Activated naive CD4-positive, alpha-beta T cell treated with anti-CD3 and anti-CD28 coated beads for 36 hours (primary cell): ENCODE measurements at regions of chr1 and their contacts with region 1.

Region 1: DNA sequence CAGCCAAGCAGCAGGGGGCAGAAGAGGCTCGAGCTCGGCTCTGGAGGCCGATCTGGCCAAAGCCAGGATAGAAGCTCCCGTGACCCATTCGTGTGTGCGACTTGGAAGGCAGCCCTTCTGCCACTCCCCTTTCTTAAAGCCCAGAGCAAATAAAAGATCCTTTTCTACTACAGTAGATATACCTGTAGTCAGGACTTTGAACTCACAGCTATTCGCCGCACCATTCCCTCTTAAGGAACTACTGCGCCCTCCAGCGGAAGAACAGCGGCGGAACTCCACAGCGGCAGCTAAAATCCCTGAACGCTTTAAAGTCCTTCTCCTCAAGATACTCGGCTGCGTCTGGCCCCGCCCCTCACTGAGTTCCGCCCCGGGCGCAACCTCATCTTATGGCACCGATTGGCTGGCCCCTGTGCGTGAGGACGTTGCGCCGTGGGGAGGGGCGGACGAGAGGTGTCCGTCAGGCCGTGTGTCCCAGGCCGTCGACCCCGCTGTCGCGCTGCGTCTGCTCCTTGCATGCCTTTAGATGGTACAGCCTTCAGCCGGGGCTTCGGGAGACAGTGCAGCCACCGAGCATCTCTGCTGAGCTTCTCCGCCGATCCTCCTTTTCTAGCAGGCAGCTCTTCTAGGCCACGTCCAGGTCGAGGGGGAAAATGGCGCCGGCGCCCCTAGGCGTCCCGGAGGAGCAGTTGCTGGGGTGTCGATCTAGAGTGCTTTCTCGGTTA is at the start of gene LRIG2:
- DNase-seq: peak; percentile 99
- H3K4me3 Mint-ChIP-seq: peak within 1 kb of the TSS; percentile 94
- H3K27ac Mint-ChIP-seq: peak within 1 kb of the TSS; percentile 91
- H3K4me1 Mint-ChIP-seq: peaks cover 27% of the 10 kb centered on the region
- H3K27me3 Mint-ChIP-seq: no peaks in the 10 kb centered on the region
- total RNA-seq, gene LRIG2: 7.7 to 9.1 TPM

Region 2: DNA sequence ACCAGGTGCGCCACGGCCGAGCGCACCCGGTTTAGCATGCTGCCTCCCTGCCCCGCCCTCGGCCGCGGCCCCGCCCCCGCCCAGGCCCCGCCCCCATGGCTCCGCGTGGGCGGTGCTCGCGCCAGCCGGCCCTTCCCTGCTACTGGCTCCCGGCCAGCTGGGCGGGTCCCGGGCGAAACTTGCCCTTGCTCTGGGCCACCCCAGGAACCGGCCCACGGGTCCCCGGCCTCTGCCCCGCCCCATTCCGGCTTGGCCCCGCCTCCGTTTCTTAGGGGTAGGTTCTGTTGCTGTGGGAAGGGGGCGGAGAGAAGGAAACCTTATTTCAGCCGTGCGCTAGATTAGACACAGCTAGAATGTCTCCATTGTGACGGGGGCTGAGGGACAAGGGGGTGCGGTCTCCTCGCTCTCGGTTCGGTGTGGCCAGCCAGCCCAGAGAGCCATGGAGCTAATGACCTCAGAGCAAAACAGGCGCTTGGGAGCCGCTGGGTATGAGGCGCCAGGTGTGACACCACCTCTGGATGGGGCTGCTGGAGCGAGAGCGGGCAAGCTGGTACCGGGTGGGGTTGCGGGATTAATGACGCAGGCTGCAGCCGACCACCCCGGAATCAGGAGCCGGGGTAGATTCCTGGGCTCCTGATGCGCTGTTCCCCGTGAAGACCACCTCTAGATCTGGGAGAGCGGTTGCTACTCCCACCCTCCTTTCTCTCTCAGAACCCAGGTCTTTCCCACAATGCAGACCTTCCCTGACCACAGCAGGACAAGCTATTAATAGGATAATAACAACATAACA is 357.5 kb before region 1 on chr1 and contains the start of gene PPM1J:
- CTCF ChIA-PET with region 1: interaction called, 44 read pairs
- intact Hi-C with region 1: loop called (anchors 2 kb)
- DNase-seq: peak; percentile 95
- H3K4me3 Mint-ChIP-seq: peak within 1 kb of the TSS; percentile 78
- H3K27ac Mint-ChIP-seq: no peak within 1 kb of the TSS
- H3K4me1 Mint-ChIP-seq: peaks cover 24% of the 10 kb centered on the region
- H3K27me3 Mint-ChIP-seq: peaks cover 24% of the 10 kb centered on the region
- total RNA-seq, gene PPM1J: 0.74 to 1.0 TPM

Region 3: DNA sequence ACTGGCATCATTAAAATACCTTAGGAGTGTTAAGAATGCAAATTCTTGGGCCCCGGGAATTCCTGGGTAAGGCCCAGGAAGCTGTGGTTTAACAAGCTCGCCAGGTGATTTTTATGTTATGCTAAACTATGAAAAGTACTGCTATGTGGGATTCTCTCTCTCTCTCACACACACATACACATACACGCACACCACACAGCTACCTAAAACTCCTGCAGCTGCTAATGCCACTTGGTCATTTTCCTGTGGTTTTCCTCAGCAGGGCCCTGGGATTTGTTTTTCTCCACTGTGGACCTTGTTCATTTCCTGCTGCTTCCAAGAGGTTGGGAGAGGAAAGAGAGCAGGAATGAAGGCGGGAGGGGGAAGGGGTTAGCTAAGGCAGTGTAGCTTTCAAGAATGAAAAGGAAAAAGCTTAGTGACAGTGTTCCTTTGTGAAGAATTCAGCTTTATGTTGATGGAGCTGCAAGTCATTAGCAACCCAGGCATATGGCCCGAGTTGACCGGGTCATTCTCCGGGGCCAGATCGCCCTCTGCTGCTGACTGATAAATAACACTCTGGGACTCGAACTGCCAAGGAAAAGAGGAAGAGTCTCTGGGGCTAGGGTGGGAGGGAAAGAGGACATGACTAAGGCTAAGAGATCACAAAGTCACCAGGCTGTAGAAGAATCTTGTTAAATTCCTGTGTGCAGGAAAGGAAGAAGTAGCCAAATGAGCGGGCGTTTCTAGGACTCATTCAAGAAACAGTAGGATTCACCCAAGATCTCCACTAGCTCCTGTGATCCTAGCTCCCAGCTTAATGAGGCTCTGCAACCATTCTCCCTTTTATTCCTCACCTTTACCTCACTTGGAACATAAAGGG is 30.4 kb before region 1 on chr1:
- CTCF ChIA-PET with region 1: interaction called, 13 read pairs
- intact Hi-C with region 1: loop called (anchors 2 kb)
- DNase-seq: peak; percentile 65
- H3K4me3 Mint-ChIP-seq: no peak overlapping the region
- H3K27ac Mint-ChIP-seq: peak overlapping the region; percentile 73
- H3K4me1 Mint-ChIP-seq: peaks cover 26% of the 10 kb centered on the region
- H3K27me3 Mint-ChIP-seq: peaks cover 2% of the 10 kb centered on the region

Region 4: GRCh38 chr1:113133038-113133437 is 60.1 kb after region 1 on chr1:
- CTCF ChIA-PET with region 1: interaction called, 23 read pairs
- intact Hi-C with region 1: loop called (anchors 2 kb)
- DNase-seq: peak; percentile 69
- H3K4me3 Mint-ChIP-seq: no peak overlapping the region
- H3K27ac Mint-ChIP-seq: peak overlapping the region; percentile 76
- H3K4me1 Mint-ChIP-seq: peaks cover 64% of the 10 kb centered on the region
- H3K27me3 Mint-ChIP-seq: no peaks in the 10 kb centered on the region

Region 5: GRCh38 chr1:113677250-113678158 is 604.6 kb after region 1 on chr1:
- CTCF ChIA-PET with region 1: interaction called, 4 read pairs
- intact Hi-C with region 1: loop called (anchors 2 kb)
- DNase-seq: no peak
- H3K4me3 Mint-ChIP-seq: no peak overlapping the region
- H3K27ac Mint-ChIP-seq: no peak overlapping the region
- H3K4me1 Mint-ChIP-seq: no peaks in the 10 kb centered on the region
- H3K27me3 Mint-ChIP-seq: no peaks in the 10 kb centered on the region

Region 6: DNA sequence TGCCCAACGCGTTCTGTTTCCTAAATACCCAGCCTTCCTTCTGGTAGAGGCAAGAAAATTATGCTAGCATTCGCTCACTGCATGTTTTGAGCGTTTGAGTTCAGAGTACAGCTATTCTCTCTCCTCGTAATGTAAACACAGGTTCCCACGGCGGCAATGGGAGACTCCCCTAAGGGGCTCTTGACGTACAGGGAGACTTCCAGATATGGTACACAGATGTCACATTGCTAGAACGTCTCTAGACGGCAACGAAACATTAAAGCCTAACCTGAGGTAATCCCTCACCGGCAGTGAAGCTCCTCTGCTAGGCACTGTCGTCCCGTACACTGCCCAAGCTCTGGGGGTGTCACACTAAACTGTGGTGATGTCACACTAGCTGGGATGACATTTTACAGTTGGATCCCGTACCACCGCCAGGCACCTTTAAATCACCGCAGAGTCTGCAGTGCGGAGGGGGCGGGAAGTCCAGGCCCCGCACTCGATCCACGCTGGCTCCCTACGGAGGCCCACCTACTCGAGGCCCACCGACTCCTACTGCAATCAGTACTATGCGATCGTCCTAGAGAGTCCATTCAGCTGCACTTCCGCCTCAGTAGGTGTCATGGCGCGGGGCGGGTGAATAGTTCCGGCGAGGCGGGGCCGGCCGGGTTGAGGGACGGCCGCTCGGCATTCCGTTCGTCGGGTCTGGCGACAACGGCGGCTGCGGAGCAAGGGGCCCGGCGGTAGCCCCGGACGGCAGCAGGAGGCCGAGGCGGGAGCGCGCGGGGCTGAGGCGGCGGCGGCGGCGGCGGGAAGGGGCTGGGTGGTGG is 856.2 kb after region 1 on chr1 and contains the start of gene HIPK1:
- CTCF ChIA-PET with region 1: no interaction called
- intact Hi-C with region 1: loop called (anchors 2 kb)
- DNase-seq: peak; percentile 94
- H3K4me3 Mint-ChIP-seq: peak within 1 kb of the TSS; percentile 96
- H3K27ac Mint-ChIP-seq: peak within 1 kb of the TSS; percentile 99
- H3K4me1 Mint-ChIP-seq: peaks cover 40% of the 10 kb centered on the region
- H3K27me3 Mint-ChIP-seq: no peaks in the 10 kb centered on the region
- total RNA-seq, gene HIPK1: 47.7 to 51.0 TPM